ENCODE measurements at regions of chr6 and their contacts with region 1.

Region 1: GRCh38 chr6:125753218-125753936 is 3.9 kb downstream of the HEY2 start:
- DNase-seq: peak; percentile 37
- H3K4me3 ChIP-seq: no peak overlapping the region
- CTCF ChIP-seq: peak; percentile 25

Region 2: GRCh38 chr6:125149256-125150144 is 603.9 kb before region 1 on chr6:
- in situ Hi-C with region 1: loop called (anchors 25 kb)
- DNase-seq: peak; percentile 61
- H3K4me3 ChIP-seq: no peak overlapping the region
- CTCF ChIP-seq: no peak

Region 3: GRCh38 chr6:125314019-125314581 is 439.3 kb before region 1 on chr6:
- in situ Hi-C with region 1: loop called (anchors 5 kb)
- DNase-seq: peak; percentile 52
- H3K4me3 ChIP-seq: no peak overlapping the region
- CTCF ChIP-seq: peak; percentile 91